Panc1 (cell line): ENCODE measurements at regions of chr5 and their contacts with region 1.

Region 1: DNA sequence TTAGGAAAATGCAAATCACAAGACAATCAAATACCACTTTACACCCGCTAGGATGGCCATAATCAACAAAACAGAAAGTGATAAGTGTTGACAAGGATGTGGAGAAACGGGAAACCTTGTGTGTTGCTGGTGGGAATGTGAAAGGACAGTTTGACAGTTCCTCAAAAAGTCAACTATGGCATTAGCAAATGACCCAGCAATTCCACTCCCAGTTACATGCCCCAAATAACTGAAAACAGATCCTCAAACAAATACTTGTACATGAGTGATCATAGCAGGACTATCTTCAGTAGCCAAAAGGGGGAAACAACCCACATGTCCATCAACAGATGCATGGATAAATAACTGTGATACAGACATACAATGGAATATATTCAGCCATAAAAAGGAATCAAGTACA is 21.2 kb downstream of the RASGEF1C start:
- DNase-seq: no peak
- ATAC-seq: no peak
- H3K4me3 ChIP-seq: no peak overlapping the region
- H3K27ac ChIP-seq: no peak overlapping the region
- H3K4me1 ChIP-seq: no peaks in the 10 kb centered on the region
- H3K27me3 ChIP-seq: no peaks in the 10 kb centered on the region
- CTCF ChIP-seq: no peak

Region 2: DNA sequence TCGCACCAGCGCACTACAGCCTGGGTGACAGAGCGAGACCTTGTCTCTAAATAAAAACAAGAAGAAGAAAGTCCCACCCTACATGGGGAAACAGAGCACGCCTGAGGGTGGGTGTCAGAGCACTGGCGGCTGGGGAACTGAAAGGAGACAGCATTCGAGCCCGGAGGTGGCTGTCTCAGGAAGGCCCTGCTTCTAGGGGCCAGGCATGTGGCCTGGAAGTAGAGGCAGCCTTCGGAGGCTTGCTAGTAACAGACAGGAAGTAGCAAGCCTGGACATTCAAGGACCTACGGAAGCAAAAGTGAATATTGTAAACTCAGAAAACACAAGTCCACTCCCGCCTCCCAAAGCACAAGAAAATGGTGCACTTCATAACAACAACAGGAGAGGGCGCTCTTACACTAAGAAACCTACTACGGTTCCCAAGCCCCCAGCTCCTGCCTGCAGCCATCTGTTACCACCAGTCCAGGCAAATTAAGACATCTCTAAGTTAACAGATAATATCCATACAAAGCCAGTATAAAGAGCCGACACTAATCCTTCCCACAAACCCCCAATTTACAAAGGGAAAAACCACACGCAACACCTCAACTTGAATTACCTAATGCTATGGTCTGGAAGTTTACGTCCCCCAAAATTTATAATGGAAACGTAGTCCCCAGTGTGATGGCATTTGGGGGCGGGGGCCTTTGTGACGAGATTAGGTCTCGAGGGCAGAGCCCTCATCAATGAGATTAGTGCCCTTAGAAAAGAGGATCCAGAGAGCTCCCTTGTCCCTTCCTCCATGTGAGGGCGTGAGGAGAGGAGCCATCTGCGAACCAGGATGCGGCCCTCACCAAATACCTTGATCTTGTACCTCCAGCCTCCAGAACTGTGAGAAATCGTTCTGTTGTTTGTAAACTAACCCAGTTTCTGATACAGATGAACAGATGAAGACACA is 13.6 kb after region 1 on chr5:
- CTCF ChIA-PET with region 1: no interaction called
- POLR2A ChIA-PET with region 1: no interaction called
- in situ Hi-C with region 1: no loop called
- intact Hi-C with region 1: no loop called
- DNase-seq: peak; percentile 10
- ATAC-seq: peak; percentile 51; the same call in 1 of the 2 replicates
- H3K4me3 ChIP-seq: no peak overlapping the region
- H3K27ac ChIP-seq: no peak overlapping the region
- H3K4me1 ChIP-seq: no peaks in the 10 kb centered on the region; the same call in 1 of the 2 replicates
- H3K27me3 ChIP-seq: no peaks in the 10 kb centered on the region
- CTCF ChIP-seq: peak; percentile 75

Region 3: DNA sequence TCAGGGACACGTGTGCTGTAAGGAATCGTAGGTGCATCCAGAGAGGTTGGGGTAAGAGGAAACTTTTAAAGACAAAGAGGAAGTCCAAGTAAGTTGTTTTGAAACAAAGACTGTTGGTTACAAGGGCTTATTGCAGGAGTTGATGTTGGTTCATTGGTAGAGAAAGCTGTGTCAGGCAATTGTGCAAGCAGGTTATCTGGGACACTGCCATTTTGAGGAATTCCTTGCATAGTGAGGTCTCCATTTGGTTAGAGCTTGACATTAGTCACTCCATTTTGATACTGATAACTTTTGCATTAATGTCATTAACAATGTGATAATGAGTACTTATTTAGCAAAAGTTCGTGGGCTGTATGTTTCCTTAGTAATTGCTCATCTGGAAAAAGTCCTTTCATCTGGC is 331.3 kb after region 1 on chr5:
- CTCF ChIA-PET with region 1: no interaction called
- POLR2A ChIA-PET with region 1: interaction called, 13 read pairs
- in situ Hi-C with region 1: no loop called
- intact Hi-C with region 1: no loop called
- DNase-seq: no peak
- ATAC-seq: no peak
- H3K4me3 ChIP-seq: no peak overlapping the region
- H3K27ac ChIP-seq: no peak overlapping the region
- H3K4me1 ChIP-seq: no peaks in the 10 kb centered on the region; the same call in 1 of the 2 replicates
- H3K27me3 ChIP-seq: no peaks in the 10 kb centered on the region
- CTCF ChIP-seq: no peak

Region 4: DNA sequence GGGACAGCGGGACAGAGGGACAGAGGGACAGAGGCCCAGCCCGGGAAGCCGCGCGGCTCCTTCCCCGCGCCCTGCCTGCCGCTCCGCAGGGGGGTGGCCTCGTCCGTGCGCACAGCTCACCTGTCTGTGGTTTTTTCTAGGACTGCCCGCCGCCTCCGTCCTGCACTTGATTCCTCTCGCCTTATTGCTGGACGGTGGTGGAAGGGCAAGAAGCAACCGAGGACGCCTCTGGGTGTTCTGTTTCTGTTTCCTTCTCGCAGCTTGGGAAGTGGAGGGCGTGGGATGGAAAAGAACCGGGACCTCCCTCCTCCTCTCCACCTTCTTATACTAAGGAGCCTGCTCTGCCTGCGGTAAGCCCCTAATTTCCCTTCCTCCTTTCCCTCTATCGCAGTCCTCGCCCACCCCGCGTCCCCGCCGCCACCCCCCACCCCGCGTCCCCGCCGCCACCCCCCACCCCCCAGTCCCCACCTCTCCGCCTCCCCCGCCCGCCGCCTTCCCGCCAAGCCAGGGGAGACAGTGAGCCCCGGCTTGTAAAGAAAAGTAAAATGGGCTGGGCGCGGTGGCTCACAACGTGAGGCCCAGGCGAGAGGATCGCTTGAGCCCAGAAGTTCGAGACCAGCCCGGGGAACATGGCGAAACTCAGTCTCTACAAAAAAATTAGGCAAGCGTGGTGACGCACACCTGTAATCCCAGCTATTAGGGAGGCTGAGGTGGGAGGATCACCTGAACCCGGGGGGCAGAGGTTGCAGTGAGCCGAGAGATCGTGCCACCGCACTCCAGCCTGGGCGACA is 471.2 kb after region 1 on chr5:
- CTCF ChIA-PET with region 1: no interaction called
- POLR2A ChIA-PET with region 1: no interaction called
- in situ Hi-C with region 1: no loop called
- intact Hi-C with region 1: no loop called
- DNase-seq: no peak
- ATAC-seq: peak; percentile 75
- H3K4me3 ChIP-seq: no peak overlapping the region
- H3K27ac ChIP-seq: no peak overlapping the region
- H3K4me1 ChIP-seq: no peaks in the 10 kb centered on the region
- H3K27me3 ChIP-seq: peaks cover 14% of the 10 kb centered on the region
- CTCF ChIP-seq: no peak